BJ (cell line): ENCODE measurements at regions of chr6 and their contacts with region 1.

Region 1: DNA sequence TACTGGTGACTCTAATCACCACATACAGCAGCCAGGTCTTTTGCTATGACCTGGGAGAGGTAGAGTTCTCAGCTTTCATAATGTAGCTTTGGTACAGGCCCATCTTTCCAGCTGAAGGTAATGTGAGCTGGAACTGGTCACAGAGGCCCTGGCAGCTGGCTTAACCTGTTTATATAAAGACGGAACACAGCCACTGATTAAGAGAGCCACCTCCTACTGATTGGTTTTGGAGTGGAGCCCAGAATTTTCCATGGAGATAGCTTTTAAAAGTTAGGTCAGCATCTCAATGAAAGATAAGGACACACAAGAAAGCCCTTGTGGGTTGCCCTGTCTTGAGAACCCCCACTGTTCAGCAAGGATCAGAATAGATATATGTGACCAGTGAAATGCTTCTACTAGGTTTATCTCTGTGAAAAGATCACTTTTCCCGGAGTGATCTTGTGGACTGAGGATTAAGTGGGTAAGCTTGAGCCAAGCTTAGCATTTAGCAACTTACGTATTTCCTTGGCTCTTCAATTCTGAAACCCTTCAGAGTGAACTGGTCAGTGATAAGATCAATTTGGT is 213.7 kb upstream of the CITED2 start:
- DNase-seq: no peak
- H3K4me3 ChIP-seq: no peak overlapping the region
- H3K27me3 ChIP-seq: no peaks in the 10 kb centered on the region
- CTCF ChIP-seq: no peak

Region 2: GRCh38 chr6:139037490-139037889 is 550.7 kb before region 1 on chr6:
- CTCF ChIA-PET with region 1: no interaction called
- POLR2A ChIA-PET with region 1: no interaction called
- DNase-seq: no peak
- H3K4me3 ChIP-seq: no peak overlapping the region
- H3K27me3 ChIP-seq: no peaks in the 10 kb centered on the region
- CTCF ChIP-seq: no peak

Region 3: DNA sequence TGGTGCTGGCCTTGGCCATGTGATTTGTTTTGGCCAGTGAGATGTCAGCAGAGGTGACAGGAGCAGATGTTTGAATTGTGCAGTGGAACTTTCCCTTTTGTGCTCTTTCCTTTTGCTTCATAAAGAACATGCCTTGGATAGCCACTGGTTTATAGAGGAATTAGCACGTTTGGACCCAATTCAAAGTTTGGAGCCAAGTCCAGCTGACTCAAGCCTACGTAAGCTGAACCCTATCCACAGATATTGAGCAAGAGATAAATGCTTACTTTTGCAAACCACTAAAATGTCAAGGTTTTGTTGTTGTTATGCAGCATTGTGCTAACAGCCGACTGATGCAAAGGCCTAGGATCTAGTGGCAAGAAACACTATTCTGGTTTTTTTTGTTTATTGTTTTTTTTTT is 17.2 kb after region 1 on chr6:
- CTCF ChIA-PET with region 1: no interaction called
- POLR2A ChIA-PET with region 1: no interaction called
- DNase-seq: no peak
- H3K4me3 ChIP-seq: no peak overlapping the region
- H3K27me3 ChIP-seq: no peaks in the 10 kb centered on the region
- CTCF ChIP-seq: no peak

Region 4: GRCh38 chr6:139708337-139709199 is 120.4 kb after region 1 on chr6:
- CTCF ChIA-PET with region 1: no interaction called
- POLR2A ChIA-PET with region 1: no interaction called
- DNase-seq: peak; percentile 66
- H3K4me3 ChIP-seq: no peak overlapping the region
- H3K27me3 ChIP-seq: no peaks in the 10 kb centered on the region
- CTCF ChIP-seq: no peak

Region 5: GRCh38 chr6:139764498-139764986 is 176.4 kb after region 1 on chr6:
- CTCF ChIA-PET with region 1: no interaction called
- POLR2A ChIA-PET with region 1: interaction called, 12 read pairs
- DNase-seq: peak; percentile 98
- H3K4me3 ChIP-seq: no peak overlapping the region
- H3K27me3 ChIP-seq: no peaks in the 10 kb centered on the region
- CTCF ChIP-seq: no peak

Region 6: GRCh38 chr6:139788303-139788702 is 200.1 kb after region 1 on chr6:
- CTCF ChIA-PET with region 1: no interaction called
- POLR2A ChIA-PET with region 1: no interaction called
- DNase-seq: no peak
- H3K4me3 ChIP-seq: no peak overlapping the region
- H3K27me3 ChIP-seq: no peaks in the 10 kb centered on the region
- CTCF ChIP-seq: no peak